AG04450 (cell line): ENCODE measurements at regions of chr6 and their contacts with region 1.

Region 1: DNA sequence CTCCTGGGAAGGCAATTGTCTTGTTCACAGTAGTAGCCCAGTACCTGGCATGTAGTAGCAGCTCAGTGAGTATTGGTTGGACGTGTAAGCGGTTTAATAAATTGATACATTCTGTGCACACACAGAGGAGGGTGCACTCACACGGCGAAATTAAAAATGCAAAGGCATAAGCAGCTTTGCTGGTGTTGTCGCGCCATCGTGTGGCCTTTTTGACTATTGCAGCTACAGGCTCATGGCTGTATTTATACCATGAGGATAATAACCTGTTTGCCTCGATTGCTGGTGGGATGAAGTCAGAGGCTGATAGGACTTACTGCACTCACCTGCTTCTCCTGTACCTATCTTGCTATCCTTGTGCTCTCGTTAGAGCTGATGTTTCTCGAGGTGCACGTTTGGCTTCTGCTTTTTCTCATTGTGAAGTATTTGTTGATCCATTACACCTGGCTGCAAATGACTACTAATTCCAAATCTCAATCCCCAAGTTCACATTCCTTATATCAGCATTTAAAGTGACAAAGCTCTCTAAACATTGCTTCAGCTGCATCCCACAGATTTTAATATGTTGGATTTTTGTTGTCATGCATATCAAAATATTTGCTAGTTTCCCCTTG is 61.5 kb downstream of the TBXT start:
- DNase-seq: peak; percentile 48
- H3K4me3 ChIP-seq: no peak overlapping the region
- H3K27ac ChIP-seq: no peak overlapping the region
- H3K27me3 ChIP-seq: peaks cover 10% of the 10 kb centered on the region
- CTCF ChIP-seq: peak; percentile 91

Region 2: DNA sequence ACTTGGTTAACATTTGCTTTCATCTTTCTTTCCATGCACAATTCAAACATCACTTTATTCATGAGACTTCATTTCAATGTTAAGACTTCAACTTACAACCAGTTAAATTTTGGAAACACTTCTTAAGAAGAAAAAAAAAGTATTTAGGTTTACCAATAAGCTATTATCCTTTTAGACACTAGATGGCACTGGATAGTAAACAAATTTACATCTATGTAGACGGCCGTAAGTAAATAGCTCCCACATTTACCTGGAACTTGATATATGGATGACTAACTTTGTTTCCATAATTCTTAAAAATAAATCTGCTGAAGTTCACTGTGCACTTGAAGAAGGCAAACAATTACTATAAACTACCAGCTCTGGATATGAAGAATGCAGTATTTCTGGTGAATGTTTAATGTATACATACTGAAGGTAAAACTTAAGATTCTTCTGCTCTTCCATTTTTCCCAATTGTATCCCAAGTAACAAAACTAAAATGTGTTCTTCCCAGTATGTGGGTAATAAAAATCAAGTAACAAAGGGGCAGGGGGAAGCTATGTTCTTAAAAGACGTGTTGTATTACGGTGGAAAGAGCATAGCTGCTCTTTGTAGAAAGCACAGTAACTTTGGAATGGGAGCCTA is 666.1 kb before region 1 on chr6:
- CTCF ChIA-PET with region 1: interaction called, 41 read pairs
- POLR2A ChIA-PET with region 1: no interaction called
- DNase-seq: peak; percentile 1
- H3K4me3 ChIP-seq: no peak overlapping the region
- H3K27ac ChIP-seq: no peak overlapping the region
- H3K27me3 ChIP-seq: no peaks in the 10 kb centered on the region
- CTCF ChIP-seq: peak; percentile 47

Region 3: GRCh38 chr6:165729307-165729936 is 376.8 kb before region 1 on chr6:
- CTCF ChIA-PET with region 1: interaction called, 36 read pairs
- POLR2A ChIA-PET with region 1: no interaction called
- DNase-seq: no peak
- H3K4me3 ChIP-seq: no peak overlapping the region
- H3K27ac ChIP-seq: no peak overlapping the region
- H3K27me3 ChIP-seq: peaks cover 3% of the 10 kb centered on the region
- CTCF ChIP-seq: peak; percentile 75

Region 4: GRCh38 chr6:165884813-165885765 is 221.1 kb before region 1 on chr6:
- CTCF ChIA-PET with region 1: interaction called, 86 read pairs
- POLR2A ChIA-PET with region 1: no interaction called
- DNase-seq: peak; percentile 45
- H3K4me3 ChIP-seq: no peak overlapping the region
- H3K27ac ChIP-seq: no peak overlapping the region
- H3K27me3 ChIP-seq: no peaks in the 10 kb centered on the region
- CTCF ChIP-seq: peak; percentile 96

Region 5: DNA sequence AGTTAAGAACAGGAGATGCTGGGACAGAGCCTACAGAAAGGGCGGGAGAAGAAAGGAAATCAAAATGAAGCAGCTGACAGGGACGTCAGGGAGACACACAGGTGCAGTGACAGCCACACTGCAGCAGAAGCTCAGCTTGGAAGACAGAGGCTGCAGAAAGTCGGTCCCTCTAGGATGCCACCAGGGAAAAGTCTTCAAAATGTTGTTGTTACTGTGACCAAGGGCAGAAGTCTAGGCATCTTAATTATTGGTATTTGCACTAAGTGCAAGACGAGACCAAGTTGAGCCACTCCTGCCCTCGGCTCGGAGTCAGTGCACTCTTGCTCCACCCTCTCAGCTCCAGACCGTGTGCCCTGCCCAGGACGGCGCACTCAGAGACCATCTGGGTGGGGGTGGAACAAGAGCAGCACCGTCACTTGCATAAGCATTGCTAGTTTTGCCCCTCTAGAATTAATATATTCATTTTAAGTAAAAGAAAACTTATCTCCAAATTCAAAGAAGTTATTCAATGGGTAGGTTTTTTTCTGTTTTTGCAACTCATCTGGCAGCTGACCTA is 199.5 kb after region 1 on chr6:
- CTCF ChIA-PET with region 1: interaction called, 10 read pairs
- POLR2A ChIA-PET with region 1: no interaction called
- DNase-seq: no peak
- H3K4me3 ChIP-seq: no peak overlapping the region
- H3K27ac ChIP-seq: no peak overlapping the region
- H3K27me3 ChIP-seq: peaks cover 51% of the 10 kb centered on the region
- CTCF ChIP-seq: no peak